Mucosa of descending colon (tissue), 3 donors: ENCODE measurements at regions of chr14 and their contacts with region 1.

Region 1: GRCh38 chr14:21103710-21104447 is 3.0 kb downstream of the TMEM253 start:
- DNase-seq: peak; percentile 96 to 97 (median 97)
- ATAC-seq: peak; percentile 86
- H3K4me3 ChIP-seq: peak overlapping the region; percentile 42
- H3K4me1 ChIP-seq: peaks cover 64% of the 10 kb centered on the region
- CTCF ChIP-seq: peak; percentile 78

Region 2: GRCh38 chr14:21068521-21069387 is 35.1 kb before region 1 on chr14:
- intact Hi-C with region 1: loop called in 1 of 2 experiments (anchors 2 kb)
- DNase-seq: peak in 2 of 3 donors; percentile 58 to 70
- ATAC-seq: peak; percentile 24
- H3K4me3 ChIP-seq: no peak overlapping the region
- H3K4me1 ChIP-seq: peaks cover 29% of the 10 kb centered on the region
- CTCF ChIP-seq: peak; percentile 13